Transverse colon (tissue), 4 donors: ENCODE measurements at regions of chr11 and their contacts with region 1.

Region 1: GRCh38 chr11:118497831-118498230 is 29.4 kb upstream of the TTC36 start:
- DNase-seq: no peak
- H3K4me3 ChIP-seq: no peak overlapping the region
- H3K27ac ChIP-seq: no peak overlapping the region
- H3K4me1 ChIP-seq: no peaks in the 10 kb centered on the region
- H3K27me3 ChIP-seq: no peaks in the 10 kb centered on the region
- CTCF ChIP-seq: no peak
- EP300 ChIP-seq: no peak
- POLR2A ChIP-seq: no peak

Region 2: DNA sequence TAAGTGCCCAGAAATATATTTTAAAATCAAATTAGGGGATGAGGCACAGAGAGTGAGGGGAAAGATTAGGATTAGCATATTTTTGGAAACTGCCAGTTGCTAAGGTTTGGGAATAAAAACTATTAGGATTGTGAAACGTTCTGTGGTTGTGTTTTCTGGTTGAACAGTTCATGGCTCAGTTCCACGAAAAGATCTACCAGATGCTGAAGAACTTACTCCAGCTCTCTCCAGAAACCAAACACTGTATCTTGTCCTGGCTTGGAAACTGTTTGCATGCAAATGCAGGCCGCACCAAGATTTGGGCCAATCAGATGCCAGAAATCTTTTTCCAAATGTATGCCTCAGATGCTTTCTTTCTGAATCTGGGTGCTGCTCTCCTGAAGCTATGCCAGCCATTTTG is 123.1 kb before region 1 on chr11:
- in situ Hi-C with region 1: loop called in 1 of 4 experiments (anchors 10 kb)
- intact Hi-C with region 1: no loop called
- DNase-seq: no peak
- H3K4me3 ChIP-seq: no peak overlapping the region
- H3K27ac ChIP-seq: no peak overlapping the region
- H3K4me1 ChIP-seq: no peaks in the 10 kb centered on the region
- H3K27me3 ChIP-seq: no peaks in the 10 kb centered on the region
- CTCF ChIP-seq: no peak
- EP300 ChIP-seq: no peak
- POLR2A ChIP-seq: no peak

Region 3: DNA sequence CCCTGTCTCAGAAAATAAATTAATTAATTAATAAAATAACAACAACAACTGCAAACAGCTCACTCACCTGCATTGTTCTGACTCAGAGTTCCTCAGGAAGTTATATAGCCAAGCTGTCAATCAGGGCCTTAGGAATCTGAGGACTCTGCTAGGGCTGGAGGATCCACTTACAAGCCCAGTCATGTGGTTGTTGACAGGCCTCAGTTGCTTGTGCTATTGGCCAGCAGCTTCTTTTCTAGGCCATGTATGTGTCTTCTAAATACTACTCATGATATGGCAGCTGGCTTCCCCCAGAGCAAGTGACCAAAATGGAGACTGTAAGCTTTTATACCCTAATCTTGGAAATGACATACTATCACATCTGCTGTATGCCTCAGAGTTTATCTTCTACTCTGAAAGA is 117.3 kb before region 1 on chr11:
- in situ Hi-C with region 1: loop called in 2 of 4 experiments (anchors 10 kb)
- intact Hi-C with region 1: no loop called
- DNase-seq: no peak
- H3K4me3 ChIP-seq: no peak overlapping the region
- H3K27ac ChIP-seq: no peak overlapping the region
- H3K4me1 ChIP-seq: no peaks in the 10 kb centered on the region
- H3K27me3 ChIP-seq: no peaks in the 10 kb centered on the region
- CTCF ChIP-seq: no peak
- EP300 ChIP-seq: no peak
- POLR2A ChIP-seq: no peak

Region 4: GRCh38 chr11:118401151-118401878 is 96.5 kb before region 1 on chr11 and contains the start of gene ATP5MG:
- in situ Hi-C with region 1: loop called in 1 of 4 experiments (anchors 10 kb)
- intact Hi-C with region 1: no loop called
- DNase-seq: peak; percentile 93
- H3K4me3 ChIP-seq: peak within 1 kb of the TSS; percentile 69 to 79 (median 72)
- H3K27ac ChIP-seq: peak within 1 kb of the TSS; percentile 82 to 95 (median 89)
- H3K4me1 ChIP-seq: peaks cover 13 to 32% (median 18%) of the 10 kb centered on the region in 4 donors
- H3K27me3 ChIP-seq: no peaks in the 10 kb centered on the region
- CTCF ChIP-seq: peak in 1 of 5 experiments; percentile 25
- EP300 ChIP-seq: no peak
- POLR2A ChIP-seq: peak; percentile 71
- total RNA-seq, gene ATP5MG: 3.8 to 74.2 (median 46.9) TPM